Activated CD4-positive, alpha-beta memory T cell treated with anti-CD3 and anti-CD28 coated beads for 36 hours (primary cell): ENCODE measurements at regions of chr1 and their contacts with region 1.

Region 1: DNA sequence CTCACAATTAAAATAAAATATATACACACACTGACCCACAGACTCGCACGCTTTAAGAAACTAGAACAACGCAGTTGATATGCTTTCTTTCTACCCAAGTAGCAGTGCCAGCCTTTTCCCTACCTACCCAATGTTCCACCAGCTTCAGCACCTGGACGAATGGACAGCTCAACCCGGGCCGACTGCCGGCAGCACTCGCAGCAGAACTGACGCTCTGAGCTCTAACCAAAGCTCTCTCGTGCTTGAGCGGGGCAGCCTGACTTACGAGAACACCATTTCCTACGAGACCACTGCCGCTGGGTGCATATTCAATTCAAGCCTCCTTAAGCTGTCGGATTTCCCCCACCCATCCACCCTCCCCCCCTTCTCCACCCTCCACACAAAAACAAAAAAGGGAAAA is 127.4 kb upstream of the DPYD start:
- DNase-seq: peak; percentile 85
- H3K4me3 Mint-ChIP-seq: no peak overlapping the region
- H3K27ac Mint-ChIP-seq: no peak overlapping the region
- H3K4me1 Mint-ChIP-seq: peaks cover 34% of the 10 kb centered on the region
- H3K27me3 Mint-ChIP-seq: peaks cover 65% of the 10 kb centered on the region

Region 2: GRCh38 chr1:97791251-97791650 is 257.0 kb before region 1 on chr1:
- CTCF ChIA-PET with region 1: interaction called, 4 read pairs
- POLR2A ChIA-PET with region 1: no interaction called
- intact Hi-C with region 1: loop called (anchors 5 kb)
- DNase-seq: no peak
- H3K4me3 Mint-ChIP-seq: no peak overlapping the region
- H3K27ac Mint-ChIP-seq: no peak overlapping the region
- H3K4me1 Mint-ChIP-seq: peaks cover 32% of the 10 kb centered on the region
- H3K27me3 Mint-ChIP-seq: no peaks in the 10 kb centered on the region